ENCODE measurements at regions of chr21 and their contacts with region 1.

Region 1: GRCh38 chr21:34888569-34889319 is 160.4 kb downstream of the RUNX1 start:
- DNase-seq: peak; percentile 59 to 90 (median 62)
- ATAC-seq: peak; percentile 61
- H3K4me3 ChIP-seq: peak overlapping the region; percentile 72
- H3K4me3 Mint-ChIP-seq: peak overlapping the region; percentile 89 to 100 (median 96)
- H3K27ac ChIP-seq: peak overlapping the region; percentile 86
- H3K27ac Mint-ChIP-seq: peak overlapping the region; percentile 95 to 100 (median 99)
- H3K4me1 ChIP-seq: peaks cover 22 to 25% of the 10 kb centered on the region in 2 donors
- H3K4me1 Mint-ChIP-seq: peaks cover 15 to 70% (median 61%) of the 10 kb centered on the region in 7 donors
- H3K27me3 ChIP-seq: no peaks in the 10 kb centered on the region
- H3K27me3 Mint-ChIP-seq: peaks cover 0 to 16% (median 0%) of the 10 kb centered on the region in 5 donors

Region 2: DNA sequence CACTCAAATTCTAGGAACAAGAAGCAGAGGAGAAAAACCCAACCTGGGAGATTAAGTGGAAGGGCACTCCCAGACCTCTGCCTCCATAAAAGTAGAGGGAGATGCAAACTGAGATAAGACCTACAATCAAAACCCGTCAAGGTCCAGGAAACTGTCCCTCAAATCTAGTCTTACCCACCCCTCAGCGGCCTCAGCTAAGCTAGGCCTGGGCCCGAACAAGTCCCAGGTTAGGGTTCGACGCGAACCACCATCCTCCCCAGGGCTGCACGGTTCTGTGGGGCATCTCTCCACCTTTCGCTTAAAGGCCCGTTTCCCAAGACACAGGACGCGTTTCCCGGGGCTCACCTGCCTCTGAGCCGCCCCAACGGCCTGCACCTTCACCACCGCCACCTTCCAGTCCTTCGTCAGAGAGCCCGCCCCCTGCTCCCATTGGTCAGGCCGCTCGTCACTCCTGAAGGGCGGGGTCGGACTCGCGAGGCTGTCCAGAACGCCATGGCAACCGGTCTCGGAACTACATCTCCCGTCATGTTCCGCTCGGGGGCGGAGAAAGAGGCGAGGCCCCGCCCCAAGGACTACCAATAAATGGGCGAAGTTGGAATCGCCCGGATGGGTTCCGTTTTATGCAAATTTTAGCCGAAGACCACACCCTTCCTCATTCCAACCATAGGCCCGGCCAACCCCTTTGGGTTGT is 1247.3 kb before region 1 on chr21 and contains the start of gene CRYZL1:
- CTCF ChIA-PET with region 1: no interaction called
- POLR2A ChIA-PET with region 1: no interaction called
- intact Hi-C with region 1: loop called in 1 of 2 experiments (anchors 5 kb)
- DNase-seq: peak; percentile 96 to 100 (median 100)
- ATAC-seq: peak; percentile 89
- H3K4me3 ChIP-seq: peak within 1 kb of the TSS; percentile 97
- H3K4me3 Mint-ChIP-seq: peak within 1 kb of the TSS; percentile 83 to 99 (median 93)
- H3K27ac ChIP-seq: peak within 1 kb of the TSS; percentile 75
- H3K27ac Mint-ChIP-seq: peak within 1 kb of the TSS; percentile 85 to 100 (median 94)
- H3K4me1 ChIP-seq: peaks cover 4 to 7% of the 10 kb centered on the region in 2 donors
- H3K4me1 Mint-ChIP-seq: peaks cover 19 to 50% (median 37%) of the 10 kb centered on the region in 7 donors
- H3K27me3 ChIP-seq: no peaks in the 10 kb centered on the region
- H3K27me3 Mint-ChIP-seq: peaks cover 9 to 29% (median 15%) of the 10 kb centered on the region in 5 donors
- total RNA-seq, gene CRYZL1: 34.6 to 75.5 (median 40.4) TPM

Region 3: GRCh38 chr21:34807146-34807880 is 81.4 kb before region 1 on chr21:
- CTCF ChIA-PET with region 1: no interaction called
- POLR2A ChIA-PET with region 1: no interaction called
- intact Hi-C with region 1: loop called (anchors 2 to 5 kb)
- DNase-seq: peak in 2 of 9 donors; percentile 32 to 64
- ATAC-seq: peak; percentile 88
- H3K4me3 ChIP-seq: no peak overlapping the region
- H3K4me3 Mint-ChIP-seq: peak overlapping the region in 3 of 10 donors; percentile 18 to 52 (median 33)
- H3K27ac ChIP-seq: peak overlapping the region; percentile 36
- H3K27ac Mint-ChIP-seq: peak overlapping the region; percentile 28 to 91 (median 81)
- H3K4me1 ChIP-seq: peaks cover 25 to 49% of the 10 kb centered on the region in 2 donors
- H3K4me1 Mint-ChIP-seq: peaks cover 38 to 89% (median 82%) of the 10 kb centered on the region in 7 donors
- H3K27me3 ChIP-seq: no peaks in the 10 kb centered on the region
- H3K27me3 Mint-ChIP-seq: no peaks in the 10 kb centered on the region

Region 4: GRCh38 chr21:34986561-34987500 is 98.1 kb after region 1 on chr21:
- CTCF ChIA-PET with region 1: interaction called, 5 read pairs
- POLR2A ChIA-PET with region 1: interaction called, 9 read pairs
- intact Hi-C with region 1: loop called (anchors 1 to 2 kb)
- DNase-seq: peak in 8 of 9 donors; percentile 52 to 74 (median 67)
- ATAC-seq: peak; percentile 83
- H3K4me3 ChIP-seq: peak overlapping the region; percentile 26
- H3K4me3 Mint-ChIP-seq: peak overlapping the region; percentile 70 to 91 (median 81)
- H3K27ac ChIP-seq: peak overlapping the region; percentile 61
- H3K27ac Mint-ChIP-seq: peak overlapping the region; percentile 82 to 98 (median 94)
- H3K4me1 ChIP-seq: peaks cover 82 to 86% of the 10 kb centered on the region in 2 donors
- H3K4me1 Mint-ChIP-seq: peaks cover 6 to 97% (median 87%) of the 10 kb centered on the region in 7 donors
- H3K27me3 ChIP-seq: no peaks in the 10 kb centered on the region
- H3K27me3 Mint-ChIP-seq: peaks cover 0 to 5% (median 0%) of the 10 kb centered on the region in 5 donors

Region 5: GRCh38 chr21:35204850-35205541 is 316.3 kb after region 1 on chr21:
- CTCF ChIA-PET with region 1: interaction called, 4 read pairs
- POLR2A ChIA-PET with region 1: interaction called, 4 read pairs
- intact Hi-C with region 1: loop called in 1 of 2 experiments (anchors 2 kb)
- DNase-seq: peak in 4 of 9 donors; percentile 7 to 13 (median 9)
- ATAC-seq: peak; percentile 24
- H3K4me3 ChIP-seq: peak overlapping the region; percentile 41
- H3K4me3 Mint-ChIP-seq: peak overlapping the region; percentile 72 to 93 (median 87)
- H3K27ac ChIP-seq: peak overlapping the region; percentile 29
- H3K27ac Mint-ChIP-seq: peak overlapping the region; percentile 8 to 83 (median 57)
- H3K4me1 ChIP-seq: peaks cover 0 to 10% of the 10 kb centered on the region in 2 donors
- H3K4me1 Mint-ChIP-seq: peaks cover 18 to 29% (median 26%) of the 10 kb centered on the region in 7 donors
- H3K27me3 ChIP-seq: no peaks in the 10 kb centered on the region
- H3K27me3 Mint-ChIP-seq: peaks cover 0 to 2% (median 0%) of the 10 kb centered on the region in 5 donors

Region 6: GRCh38 chr21:35528116-35529042 is 639.6 kb after region 1 on chr21:
- CTCF ChIA-PET with region 1: no interaction called
- POLR2A ChIA-PET with region 1: interaction called, 3 read pairs
- intact Hi-C with region 1: loop called (anchors 5 kb)
- DNase-seq: peak; percentile 14 to 57 (median 42)
- ATAC-seq: peak; percentile 70
- H3K4me3 ChIP-seq: peak overlapping the region; percentile 91
- H3K4me3 Mint-ChIP-seq: peak overlapping the region; percentile 82 to 93 (median 90)
- H3K27ac ChIP-seq: peak overlapping the region; percentile 84
- H3K27ac Mint-ChIP-seq: peak overlapping the region; percentile 94 to 98 (median 96)
- H3K4me1 ChIP-seq: peaks cover 7 to 31% of the 10 kb centered on the region in 2 donors
- H3K4me1 Mint-ChIP-seq: peaks cover 34 to 61% (median 51%) of the 10 kb centered on the region in 7 donors
- H3K27me3 ChIP-seq: no peaks in the 10 kb centered on the region
- H3K27me3 Mint-ChIP-seq: no peaks in the 10 kb centered on the region

Region 7: DNA sequence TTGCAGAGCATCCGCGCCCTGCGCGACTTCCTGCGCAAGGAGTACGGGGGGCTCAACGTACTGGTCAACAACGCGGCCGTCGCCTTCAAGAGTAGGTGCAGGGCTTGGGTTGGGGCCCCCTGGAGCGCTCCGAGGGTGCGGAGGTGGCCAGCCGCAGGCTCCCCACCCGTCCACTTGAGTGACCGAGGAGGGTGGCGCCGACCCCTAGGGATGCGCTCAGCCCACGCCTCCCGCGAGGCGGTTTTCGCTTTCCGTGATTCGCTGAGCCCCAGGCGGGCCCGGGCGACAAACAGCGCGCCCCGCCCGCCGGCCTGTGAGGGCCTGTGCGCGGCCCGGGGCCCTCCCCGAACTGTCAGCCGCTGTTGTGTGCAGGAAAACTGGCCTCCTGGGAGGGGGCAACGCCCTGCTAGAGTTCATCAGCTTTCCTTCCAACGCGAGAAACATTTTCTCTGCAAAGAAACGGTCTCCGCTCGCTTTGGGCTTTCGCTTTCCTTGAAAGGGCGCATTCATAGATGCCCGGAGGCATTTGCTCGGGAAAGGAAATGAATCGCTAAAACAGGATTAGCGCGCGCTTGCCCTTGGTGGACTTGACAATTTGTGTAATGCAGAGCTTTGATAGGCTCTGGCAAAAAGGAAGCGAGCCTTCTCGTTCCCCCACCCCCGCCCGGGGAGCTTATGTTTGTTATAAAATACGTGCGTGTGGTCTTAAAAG is 1246.8 kb after region 1 on chr21:
- CTCF ChIA-PET with region 1: no interaction called
- POLR2A ChIA-PET with region 1: no interaction called
- intact Hi-C with region 1: loop called in 1 of 2 experiments (anchors 5 kb)
- DNase-seq: peak; percentile 25 to 76 (median 41)
- ATAC-seq: peak; percentile 84
- H3K4me3 ChIP-seq: peak overlapping the region; percentile 81
- H3K4me3 Mint-ChIP-seq: peak overlapping the region; percentile 83 to 98 (median 92)
- H3K27ac ChIP-seq: peak overlapping the region; percentile 58
- H3K27ac Mint-ChIP-seq: peak overlapping the region; percentile 79 to 94 (median 88)
- H3K4me1 ChIP-seq: peaks cover 4 to 13% of the 10 kb centered on the region in 2 donors
- H3K4me1 Mint-ChIP-seq: peaks cover 11 to 33% (median 26%) of the 10 kb centered on the region in 7 donors
- H3K27me3 ChIP-seq: no peaks in the 10 kb centered on the region
- H3K27me3 Mint-ChIP-seq: no peaks in the 10 kb centered on the region